ENCODE measurements at regions of chr1 and their contacts with region 1.

Region 1: DNA sequence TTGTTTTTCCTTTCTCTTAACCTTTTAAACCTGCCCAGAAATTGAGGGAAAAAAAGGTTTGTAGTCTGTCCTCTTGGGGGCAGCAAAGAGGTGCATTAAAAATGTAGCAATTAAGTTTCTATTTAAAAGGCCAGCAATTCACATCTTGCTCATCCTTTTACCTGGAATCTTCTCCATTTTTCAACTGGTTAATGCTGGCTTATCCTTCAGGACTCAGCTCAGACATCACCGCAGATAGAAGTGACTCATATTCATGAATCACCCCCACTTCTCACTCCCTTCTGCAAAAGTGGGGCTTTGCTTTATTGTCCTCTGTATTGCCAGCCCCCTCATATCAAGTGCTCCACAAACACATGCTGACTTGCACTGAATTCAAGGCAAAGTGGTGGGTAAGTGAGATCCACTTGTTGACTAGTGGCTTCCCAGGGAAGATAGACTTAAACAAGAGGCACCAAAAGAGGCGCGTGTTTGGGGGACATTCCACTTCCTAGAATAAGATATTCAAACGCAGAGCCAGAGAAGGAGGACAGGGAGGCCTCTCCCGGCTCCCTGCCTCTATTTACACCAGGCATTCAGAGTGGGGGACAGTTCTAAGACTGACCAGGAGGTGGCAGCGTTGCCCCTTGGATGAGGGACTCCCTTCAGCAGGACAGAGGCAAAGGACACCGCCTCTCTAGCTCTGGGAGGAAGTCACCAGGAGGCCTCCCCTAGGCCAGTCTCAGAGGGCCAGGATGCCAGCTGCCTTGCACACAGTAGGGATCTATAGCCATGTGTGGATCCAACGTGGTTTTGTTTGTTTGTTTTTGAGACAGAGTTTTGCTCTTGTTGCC is 23.2 kb upstream of the ZNF648 start:
- DNase-seq: peak; percentile 95
- ATAC-seq: peak; percentile 91
- H3K4me3 Mint-ChIP-seq: no peak overlapping the region
- H3K27ac Mint-ChIP-seq: peak overlapping the region; percentile 55; the same call in 1 of the 2 replicates
- H3K4me1 Mint-ChIP-seq: peaks cover 14% of the 10 kb centered on the region
- H3K27me3 Mint-ChIP-seq: no peaks in the 10 kb centered on the region
- CTCF ChIP-seq: peak; percentile 70

Region 2: DNA sequence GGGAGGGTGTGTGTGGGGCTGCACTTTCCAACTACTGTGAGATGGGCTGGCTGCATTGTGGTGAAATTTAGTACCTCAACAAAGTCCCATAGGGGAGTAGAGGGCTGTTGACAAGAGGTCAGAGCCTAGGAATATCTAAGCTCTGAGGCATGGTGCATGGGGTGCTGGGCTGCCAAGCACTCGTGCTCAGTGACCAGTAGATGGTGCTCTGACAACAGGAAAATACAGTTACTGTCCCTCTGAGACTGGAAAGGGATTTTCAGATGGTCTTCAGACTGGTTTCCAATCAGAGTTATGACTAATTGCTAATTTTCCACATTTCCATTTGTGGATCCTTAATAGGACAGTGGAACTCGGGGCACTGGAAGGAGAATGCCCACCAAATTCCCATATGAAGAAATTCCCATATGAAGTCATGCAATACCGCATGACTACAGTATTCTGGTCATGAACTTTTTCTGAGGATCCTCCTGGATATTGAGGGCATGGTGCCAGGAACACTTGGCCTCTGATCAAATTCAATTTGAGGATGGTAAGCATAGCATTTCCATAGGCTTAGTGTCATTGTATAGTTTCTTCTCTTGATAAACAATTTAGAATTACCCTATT is 605.5 kb before region 1 on chr1:
- CTCF ChIA-PET with region 1: interaction called, 25 read pairs
- POLR2A ChIA-PET with region 1: no interaction called
- DNase-seq: peak; percentile 56
- ATAC-seq: peak; percentile 66
- H3K4me3 Mint-ChIP-seq: no peak overlapping the region
- H3K27ac Mint-ChIP-seq: no peak overlapping the region
- H3K4me1 Mint-ChIP-seq: peaks cover 21% of the 10 kb centered on the region
- H3K27me3 Mint-ChIP-seq: peaks cover 47% of the 10 kb centered on the region
- CTCF ChIP-seq: peak; percentile 55

Region 3: DNA sequence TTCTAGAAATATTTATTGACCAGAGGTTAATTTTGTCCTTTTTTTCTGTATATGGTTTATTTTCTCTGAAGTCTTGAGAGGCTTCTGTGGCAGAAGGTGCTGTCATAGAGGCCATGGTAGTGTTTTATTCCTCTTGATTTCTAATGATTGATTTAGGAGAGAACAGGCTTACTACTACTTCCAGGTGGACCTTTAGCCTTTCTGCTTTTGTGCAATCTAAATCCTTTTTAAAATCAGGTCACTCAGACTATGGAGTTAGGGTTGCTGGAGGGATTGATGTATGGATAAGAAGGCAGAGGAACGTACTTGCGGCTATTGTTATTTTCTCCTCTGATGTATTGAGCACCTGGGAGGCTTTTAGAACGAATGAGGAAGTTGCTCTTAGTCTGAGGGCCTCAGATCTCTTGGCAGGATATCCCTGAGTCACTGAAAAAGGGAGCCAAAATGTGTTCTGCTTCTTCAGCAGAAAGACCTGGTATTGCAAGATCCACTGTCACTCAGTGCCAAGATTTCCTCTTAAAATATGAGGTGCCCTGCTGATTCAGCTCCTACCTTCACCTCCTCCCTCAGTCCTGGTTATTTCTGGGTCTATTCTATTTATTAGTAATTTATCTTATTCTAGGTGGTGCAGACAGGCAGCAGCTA is 300.5 kb before region 1 on chr1:
- CTCF ChIA-PET with region 1: no interaction called
- POLR2A ChIA-PET with region 1: no interaction called
- DNase-seq: no peak
- ATAC-seq: no peak
- H3K4me3 Mint-ChIP-seq: no peak overlapping the region
- H3K27ac Mint-ChIP-seq: no peak overlapping the region
- H3K4me1 Mint-ChIP-seq: peaks cover 20% of the 10 kb centered on the region
- H3K27me3 Mint-ChIP-seq: no peaks in the 10 kb centered on the region; the same call in 1 of the 2 replicates
- CTCF ChIP-seq: no peak

Region 4: DNA sequence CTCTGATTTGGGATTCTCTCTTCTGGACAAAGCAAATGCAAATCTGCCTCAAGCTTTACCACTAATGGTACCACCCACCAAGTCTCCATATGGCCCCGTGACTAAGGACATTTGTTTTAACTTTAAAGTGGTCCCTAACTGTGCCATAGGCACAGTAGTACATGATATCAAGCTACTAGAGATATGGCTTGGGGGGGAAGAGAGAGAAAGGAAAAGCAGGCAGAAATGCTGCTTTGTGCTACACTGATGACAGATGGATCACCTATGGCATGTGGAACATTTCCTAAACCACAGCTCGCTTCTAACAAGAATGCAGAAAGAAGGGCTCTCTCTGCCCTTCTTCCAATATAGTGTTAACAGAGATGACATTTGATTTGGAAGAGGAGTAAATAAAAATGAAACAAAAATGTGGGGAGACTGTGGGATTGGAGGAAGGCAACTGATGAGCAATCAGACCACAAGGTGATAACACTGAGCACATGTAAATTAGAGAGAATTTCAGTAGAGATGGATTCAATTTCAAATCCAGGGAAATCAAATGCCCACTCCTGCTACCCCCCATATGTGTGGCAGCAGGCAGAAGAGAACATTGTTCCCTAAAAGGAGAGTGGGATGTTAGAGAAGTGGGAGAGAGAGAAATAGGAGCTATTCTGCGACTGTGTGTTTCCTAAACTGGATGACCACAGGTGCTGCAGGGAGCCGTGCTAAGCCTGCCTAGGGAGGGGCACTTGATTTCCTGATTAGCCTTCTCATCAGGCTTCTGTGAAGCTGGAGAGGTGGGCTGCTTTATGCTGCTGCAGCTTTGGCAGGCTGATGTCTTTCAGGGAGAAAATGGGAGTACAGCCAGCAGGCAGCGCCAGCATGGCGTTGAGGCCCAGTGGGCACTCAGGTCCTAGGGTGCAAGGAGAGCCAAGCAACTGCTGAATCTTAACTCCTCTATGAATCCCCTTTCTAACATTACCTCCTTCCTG is 98.5 kb before region 1 on chr1:
- CTCF ChIA-PET with region 1: interaction called, 13 read pairs
- POLR2A ChIA-PET with region 1: no interaction called
- DNase-seq: no peak
- ATAC-seq: peak; percentile 71
- H3K4me3 Mint-ChIP-seq: no peak overlapping the region
- H3K27ac Mint-ChIP-seq: no peak overlapping the region
- H3K4me1 Mint-ChIP-seq: peaks cover 25% of the 10 kb centered on the region
- H3K27me3 Mint-ChIP-seq: no peaks in the 10 kb centered on the region
- CTCF ChIP-seq: no peak

Region 5: GRCh38 chr1:182015360-182015759 is 69.3 kb before region 1 on chr1:
- CTCF ChIA-PET with region 1: no interaction called
- POLR2A ChIA-PET with region 1: no interaction called
- DNase-seq: no peak
- ATAC-seq: peak; percentile 60
- H3K4me3 Mint-ChIP-seq: no peak overlapping the region
- H3K27ac Mint-ChIP-seq: no peak overlapping the region; the same call in 1 of the 2 replicates
- H3K4me1 Mint-ChIP-seq: no peaks in the 10 kb centered on the region
- H3K27me3 Mint-ChIP-seq: no peaks in the 10 kb centered on the region
- CTCF ChIP-seq: no peak

Region 6: DNA sequence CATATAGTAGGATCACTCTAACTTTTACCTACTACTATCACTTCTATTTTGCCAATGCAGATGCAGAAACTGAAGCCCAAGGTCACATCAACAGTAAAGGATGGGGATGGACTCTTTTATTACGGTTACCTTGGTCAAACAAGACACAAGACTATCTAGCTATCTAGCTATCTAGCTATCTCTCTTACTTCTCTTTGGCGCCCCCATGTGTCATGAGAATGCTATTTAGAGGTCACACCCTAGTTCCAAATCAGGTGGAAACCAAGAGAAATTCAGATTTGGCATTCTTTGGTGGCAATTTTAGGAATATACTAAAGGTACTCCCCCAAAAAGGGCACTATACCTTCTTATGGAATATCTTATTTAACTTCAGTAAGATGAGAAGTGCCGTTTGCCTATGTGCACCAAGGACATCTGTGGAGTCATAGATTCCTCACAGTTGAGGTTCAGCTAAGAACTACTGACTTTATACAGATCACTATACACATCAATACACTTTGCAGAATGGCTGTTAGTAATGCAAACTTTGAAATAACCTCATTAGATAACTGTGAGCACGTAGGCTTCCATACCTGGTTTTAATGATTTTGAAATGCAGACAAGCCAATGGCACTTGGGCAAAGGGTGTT is 29.9 kb before region 1 on chr1:
- CTCF ChIA-PET with region 1: interaction called, 39 read pairs
- POLR2A ChIA-PET with region 1: no interaction called
- DNase-seq: peak; percentile 69
- ATAC-seq: peak; percentile 83
- H3K4me3 Mint-ChIP-seq: no peak overlapping the region
- H3K27ac Mint-ChIP-seq: no peak overlapping the region
- H3K4me1 Mint-ChIP-seq: no peaks in the 10 kb centered on the region
- H3K27me3 Mint-ChIP-seq: peaks cover 26% of the 10 kb centered on the region
- CTCF ChIP-seq: peak; percentile 50

Region 7: GRCh38 chr1:182069028-182069466 is 15.7 kb before region 1 on chr1:
- CTCF ChIA-PET with region 1: interaction called, 62 read pairs
- POLR2A ChIA-PET with region 1: no interaction called
- DNase-seq: peak; percentile 74
- ATAC-seq: peak; percentile 99
- H3K4me3 Mint-ChIP-seq: peak overlapping the region; percentile 16
- H3K27ac Mint-ChIP-seq: no peak overlapping the region
- H3K4me1 Mint-ChIP-seq: peaks cover 5% of the 10 kb centered on the region
- H3K27me3 Mint-ChIP-seq: peaks cover 1% of the 10 kb centered on the region; the same call in 1 of the 2 replicates
- CTCF ChIP-seq: peak; percentile 51

Region 8: DNA sequence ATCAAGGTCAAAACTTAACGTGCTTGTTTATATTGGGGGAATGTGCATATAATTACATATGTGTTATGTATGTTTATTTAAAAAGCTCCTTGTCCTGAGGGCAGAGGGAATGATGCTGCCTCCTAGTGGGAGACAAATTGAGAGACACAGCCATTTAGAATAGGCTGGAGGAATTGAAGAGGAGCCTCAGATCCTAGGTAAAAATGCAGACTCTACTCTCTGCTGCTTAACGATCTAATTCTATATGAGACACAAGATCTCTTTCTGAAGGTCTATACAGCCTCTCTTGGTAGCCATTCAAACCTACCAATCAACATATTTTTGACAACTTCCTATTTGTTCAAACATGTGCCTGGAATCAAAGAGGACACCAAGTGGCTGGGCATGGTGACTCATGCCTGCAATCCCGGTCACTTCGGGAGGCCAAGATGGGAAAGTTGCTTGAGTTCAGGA is 113.4 kb after region 1 on chr1:
- CTCF ChIA-PET with region 1: interaction called, 36 read pairs
- POLR2A ChIA-PET with region 1: no interaction called
- DNase-seq: no peak
- ATAC-seq: peak; percentile 67
- H3K4me3 Mint-ChIP-seq: no peak overlapping the region
- H3K27ac Mint-ChIP-seq: no peak overlapping the region
- H3K4me1 Mint-ChIP-seq: no peaks in the 10 kb centered on the region; the same call in none of the 2 replicates
- H3K27me3 Mint-ChIP-seq: no peaks in the 10 kb centered on the region
- CTCF ChIP-seq: peak; percentile 27; the same call in 1 of the 2 replicates

Region 9: GRCh38 chr1:182397771-182398393 is 313.2 kb after region 1 on chr1:
- CTCF ChIA-PET with region 1: interaction called, 40 read pairs
- POLR2A ChIA-PET with region 1: no interaction called
- DNase-seq: no peak
- ATAC-seq: no peak
- H3K4me3 Mint-ChIP-seq: no peak overlapping the region
- H3K27ac Mint-ChIP-seq: no peak overlapping the region
- H3K4me1 Mint-ChIP-seq: peaks cover 30% of the 10 kb centered on the region
- H3K27me3 Mint-ChIP-seq: no peaks in the 10 kb centered on the region
- CTCF ChIP-seq: no peak

Measured in WTC11 (cell line).